Right lobe of liver (tissue), 6 donors: ENCODE measurements at regions of chr7 and their contacts with region 1.

Region 1: DNA sequence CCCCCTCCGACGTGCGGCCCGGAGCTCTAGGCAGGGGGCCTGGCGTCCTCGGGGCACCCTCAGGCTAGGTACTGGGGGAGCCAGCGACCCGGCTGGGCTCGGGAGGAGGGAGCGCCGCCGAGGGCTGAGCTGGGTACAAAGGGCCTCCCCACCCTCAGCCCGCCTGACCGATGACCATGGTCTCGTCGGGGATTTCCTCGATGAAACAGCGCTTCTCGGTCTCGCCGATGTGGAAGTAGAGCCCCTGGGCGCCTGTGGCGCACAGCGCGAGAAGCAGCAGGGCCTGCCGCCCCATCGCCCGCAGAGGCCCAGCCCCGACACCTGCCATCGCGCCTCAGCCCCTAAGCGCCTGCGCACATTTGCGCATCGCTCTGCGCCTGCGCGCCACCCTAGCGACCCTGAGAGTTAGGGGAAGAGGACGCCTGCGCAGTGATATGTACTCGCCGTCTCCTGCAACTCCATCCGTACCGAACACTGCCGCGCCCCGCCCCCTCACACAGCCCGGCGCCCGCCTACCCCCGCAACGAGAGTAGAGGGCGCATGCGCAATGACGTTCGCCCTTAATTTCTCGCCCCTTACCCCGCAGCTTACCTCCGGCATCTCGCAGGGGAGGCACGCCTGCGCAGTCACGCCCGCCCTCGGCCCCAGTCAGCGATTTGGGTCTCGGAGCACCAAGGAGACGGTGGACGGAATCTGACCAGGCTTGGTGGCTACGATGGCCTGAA is at the start of gene TMED4:
- DNase-seq: peak; percentile 100
- ATAC-seq: peak; percentile 94 to 98 (median 96)
- H3K4me3 ChIP-seq: peak within 1 kb of the TSS; percentile 84 to 94 (median 93)
- H3K27ac ChIP-seq: peak within 1 kb of the TSS; percentile 95 to 97 (median 96)
- H3K4me1 ChIP-seq: peaks cover 0 to 14% (median 5%) of the 10 kb centered on the region in 4 donors
- H3K27me3 ChIP-seq: no peaks in the 10 kb centered on the region
- CTCF ChIP-seq: no peak
- POLR2A ChIP-seq: peak; percentile 86
- total RNA-seq, gene TMED4: 32.5 to 91.1 (median 41.7) TPM

Region 2: GRCh38 chr7:44847508-44847920 is 265.5 kb after region 1 on chr7:
- intact Hi-C with region 1: loop called in 1 of 2 experiments (anchors 10 kb)
- DNase-seq: peak; percentile 90 to 92 (median 91)
- ATAC-seq: peak; percentile 73 to 83 (median 79)
- H3K4me3 ChIP-seq: peak overlapping the region; percentile 58 to 84 (median 79)
- H3K27ac ChIP-seq: peak overlapping the region; percentile 92 to 96 (median 95)
- H3K4me1 ChIP-seq: peaks cover 0 to 13% (median 8%) of the 10 kb centered on the region in 4 donors
- H3K27me3 ChIP-seq: no peaks in the 10 kb centered on the region
- CTCF ChIP-seq: peak; percentile 89 to 95 (median 92)
- POLR2A ChIP-seq: no peak